CD4-positive, alpha-beta memory T cell (primary cell): ENCODE measurements at regions of chr3 and their contacts with region 1.

Region 1: DNA sequence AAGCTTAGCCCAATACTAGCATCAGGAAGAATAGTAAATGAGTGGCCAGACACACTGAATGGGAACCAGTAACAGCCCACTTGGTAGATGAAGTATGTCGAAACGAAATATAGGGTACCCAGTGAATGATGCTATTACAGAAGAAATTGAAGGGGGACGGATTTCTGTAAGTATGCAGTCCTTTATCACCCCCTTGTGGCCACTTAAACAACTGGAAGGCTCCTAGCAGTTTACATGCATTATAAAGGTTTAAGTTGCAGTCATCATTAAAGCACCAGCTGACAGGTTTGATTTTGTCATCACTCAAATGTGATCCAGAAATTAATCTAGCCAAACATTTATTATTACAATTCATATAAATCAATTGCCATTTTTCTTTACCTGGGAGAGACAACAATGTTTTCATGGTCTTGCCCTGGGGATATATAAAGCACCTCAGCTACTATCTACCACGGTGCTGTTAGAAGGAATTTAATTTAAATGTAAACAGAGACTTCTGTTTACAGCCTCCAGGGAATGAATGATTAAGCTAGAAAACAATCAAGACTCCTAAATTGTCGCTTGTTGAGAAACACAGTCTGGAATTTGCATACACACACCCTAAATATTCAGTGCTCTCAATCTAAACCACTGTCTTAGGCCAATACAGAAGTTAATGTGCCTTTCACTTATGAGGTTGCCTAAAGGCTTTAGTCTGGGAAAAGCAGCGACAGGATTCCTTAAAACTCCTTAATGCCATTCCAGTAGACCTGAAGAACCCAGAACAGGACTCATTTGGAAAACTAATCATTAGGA is 7.8 kb downstream of the EIF1B start:
- DNase-seq: peak; percentile 56 to 63 (median 58)
- H3K4me3 ChIP-seq: no peak overlapping the region
- H3K4me3 Mint-ChIP-seq: no peak overlapping the region
- H3K27ac ChIP-seq: no peak overlapping the region
- H3K27ac Mint-ChIP-seq: peak overlapping the region in 1 of 7 donors; percentile 50
- H3K4me1 ChIP-seq: peaks cover 5% of the 10 kb centered on the region
- H3K4me1 Mint-ChIP-seq: peaks cover 6 to 19% (median 8%) of the 10 kb centered on the region in 4 donors
- H3K27me3 ChIP-seq: no peaks in the 10 kb centered on the region
- H3K27me3 Mint-ChIP-seq: no peaks in the 10 kb centered on the region

Region 2: GRCh38 chr3:40191850-40192448 is 125.3 kb before region 1 on chr3:
- CTCF ChIA-PET with region 1: interaction called, 199 read pairs
- POLR2A ChIA-PET with region 1: interaction called, 7 read pairs
- intact Hi-C with region 1: loop called (anchors 1 kb)
- DNase-seq: peak in 4 of 5 donors; percentile 30 to 56 (median 40)
- H3K4me3 ChIP-seq: no peak overlapping the region
- H3K4me3 Mint-ChIP-seq: no peak overlapping the region
- H3K27ac ChIP-seq: no peak overlapping the region
- H3K27ac Mint-ChIP-seq: no peak overlapping the region
- H3K4me1 ChIP-seq: no peaks in the 10 kb centered on the region
- H3K4me1 Mint-ChIP-seq: peaks cover 0 to 2% (median 0%) of the 10 kb centered on the region in 4 donors
- H3K27me3 ChIP-seq: no peaks in the 10 kb centered on the region
- H3K27me3 Mint-ChIP-seq: no peaks in the 10 kb centered on the region

Region 3: DNA sequence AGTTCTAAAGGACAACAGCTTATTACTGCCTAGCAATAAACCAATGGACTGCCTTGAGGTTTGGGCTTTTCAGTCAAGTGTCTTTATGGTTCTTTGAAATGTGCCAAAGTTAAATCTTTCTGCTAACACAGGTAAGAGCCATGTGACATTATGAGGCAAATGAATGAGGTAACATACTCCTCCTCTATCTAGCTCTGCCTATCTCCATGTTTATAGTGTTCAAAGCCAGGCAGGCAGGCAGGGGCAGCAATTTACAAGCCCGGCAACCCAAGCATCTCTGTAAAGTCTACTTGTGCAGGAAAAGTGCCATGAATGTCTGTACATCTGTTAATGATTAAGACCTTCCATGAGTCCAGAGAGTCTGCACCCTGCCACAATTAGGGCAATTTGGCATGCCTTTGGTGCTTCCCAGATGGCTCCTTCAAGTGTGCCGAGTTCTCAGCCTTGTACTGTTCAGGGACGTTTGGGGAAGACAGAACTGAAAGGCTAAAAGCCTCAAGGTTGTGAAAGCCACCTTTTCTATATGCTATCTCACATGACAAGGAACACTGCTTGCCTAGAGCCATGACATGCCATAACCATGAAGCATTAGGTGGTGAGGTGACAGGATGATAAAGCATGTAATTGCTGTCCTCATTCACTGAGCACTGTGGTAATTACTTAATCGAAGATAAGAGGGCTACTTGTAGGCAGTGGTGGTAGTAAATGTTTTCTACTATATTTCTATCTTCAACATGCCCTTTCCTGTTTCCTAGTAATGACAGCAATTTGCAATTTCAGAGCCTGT is 49.1 kb before region 1 on chr3:
- CTCF ChIA-PET with region 1: no interaction called
- POLR2A ChIA-PET with region 1: no interaction called
- intact Hi-C with region 1: no loop called
- DNase-seq: no peak
- H3K4me3 ChIP-seq: no peak overlapping the region
- H3K4me3 Mint-ChIP-seq: no peak overlapping the region
- H3K27ac ChIP-seq: no peak overlapping the region
- H3K27ac Mint-ChIP-seq: no peak overlapping the region
- H3K4me1 ChIP-seq: no peaks in the 10 kb centered on the region
- H3K4me1 Mint-ChIP-seq: peaks cover 0 to 4% (median 0%) of the 10 kb centered on the region in 4 donors
- H3K27me3 ChIP-seq: no peaks in the 10 kb centered on the region
- H3K27me3 Mint-ChIP-seq: no peaks in the 10 kb centered on the region

Region 4: DNA sequence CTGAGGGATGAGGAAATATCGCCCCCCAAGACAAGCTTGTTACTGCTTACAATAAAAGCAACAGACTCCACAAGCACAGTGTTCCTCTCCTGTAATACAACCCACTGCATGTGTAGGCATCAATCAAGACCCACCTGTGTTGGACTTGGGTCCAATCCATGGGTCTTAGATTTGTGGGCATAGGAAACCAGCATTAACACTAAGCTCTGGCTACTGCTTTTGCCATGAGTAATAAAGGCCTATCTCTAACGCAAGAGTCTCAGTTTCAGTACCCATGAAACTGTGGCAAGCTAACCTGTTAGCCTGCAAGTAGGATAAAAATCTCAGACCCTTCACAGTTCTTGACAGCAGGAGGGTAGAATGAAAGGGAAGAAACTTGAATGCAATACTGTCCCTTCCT is 12.9 kb before region 1 on chr3:
- CTCF ChIA-PET with region 1: interaction called, 18 read pairs
- POLR2A ChIA-PET with region 1: interaction called, 3 read pairs
- intact Hi-C with region 1: no loop called
- DNase-seq: no peak
- H3K4me3 ChIP-seq: no peak overlapping the region
- H3K4me3 Mint-ChIP-seq: no peak overlapping the region
- H3K27ac ChIP-seq: no peak overlapping the region
- H3K27ac Mint-ChIP-seq: no peak overlapping the region
- H3K4me1 ChIP-seq: peaks cover 8% of the 10 kb centered on the region
- H3K4me1 Mint-ChIP-seq: peaks cover 1 to 9% (median 6%) of the 10 kb centered on the region in 4 donors
- H3K27me3 ChIP-seq: no peaks in the 10 kb centered on the region
- H3K27me3 Mint-ChIP-seq: no peaks in the 10 kb centered on the region

Region 5: GRCh38 chr3:40329071-40329470 is 11.8 kb after region 1 on chr3:
- CTCF ChIA-PET with region 1: interaction called, 13 read pairs
- POLR2A ChIA-PET with region 1: no interaction called
- intact Hi-C with region 1: no loop called
- DNase-seq: no peak
- H3K4me3 ChIP-seq: no peak overlapping the region
- H3K4me3 Mint-ChIP-seq: no peak overlapping the region
- H3K27ac ChIP-seq: no peak overlapping the region
- H3K27ac Mint-ChIP-seq: no peak overlapping the region
- H3K4me1 ChIP-seq: no peaks in the 10 kb centered on the region
- H3K4me1 Mint-ChIP-seq: peaks cover 3 to 4% (median 4%) of the 10 kb centered on the region in 4 donors
- H3K27me3 ChIP-seq: no peaks in the 10 kb centered on the region
- H3K27me3 Mint-ChIP-seq: peaks cover 3% of the 10 kb centered on the region in 2 donors

Region 6: GRCh38 chr3:41117398-41117870 is 800.2 kb after region 1 on chr3:
- CTCF ChIA-PET with region 1: no interaction called
- POLR2A ChIA-PET with region 1: no interaction called
- intact Hi-C with region 1: loop called (anchors 10 kb)
- DNase-seq: peak; percentile 82 to 89 (median 88)
- H3K4me3 ChIP-seq: peak overlapping the region; percentile 10 to 31
- H3K4me3 Mint-ChIP-seq: peak overlapping the region; percentile 64 to 85 (median 77)
- H3K27ac ChIP-seq: peak overlapping the region; percentile 59
- H3K27ac Mint-ChIP-seq: peak overlapping the region; percentile 84 to 97 (median 95)
- H3K4me1 ChIP-seq: peaks cover 29% of the 10 kb centered on the region
- H3K4me1 Mint-ChIP-seq: peaks cover 20 to 35% (median 26%) of the 10 kb centered on the region in 4 donors
- H3K27me3 ChIP-seq: no peaks in the 10 kb centered on the region
- H3K27me3 Mint-ChIP-seq: no peaks in the 10 kb centered on the region

Region 7: GRCh38 chr3:41290736-41291135 is 973.5 kb after region 1 on chr3:
- CTCF ChIA-PET with region 1: no interaction called
- POLR2A ChIA-PET with region 1: no interaction called
- intact Hi-C with region 1: no loop called
- DNase-seq: no peak
- H3K4me3 ChIP-seq: no peak overlapping the region
- H3K4me3 Mint-ChIP-seq: no peak overlapping the region
- H3K27ac ChIP-seq: no peak overlapping the region
- H3K27ac Mint-ChIP-seq: no peak overlapping the region
- H3K4me1 ChIP-seq: peaks cover 5% of the 10 kb centered on the region
- H3K4me1 Mint-ChIP-seq: peaks cover 3 to 11% (median 9%) of the 10 kb centered on the region in 4 donors
- H3K27me3 ChIP-seq: no peaks in the 10 kb centered on the region
- H3K27me3 Mint-ChIP-seq: no peaks in the 10 kb centered on the region